Left ventricle myocardium inferior (tissue), 1 donor: ENCODE measurements at regions of chr3 and their contacts with region 1.

Region 1: DNA sequence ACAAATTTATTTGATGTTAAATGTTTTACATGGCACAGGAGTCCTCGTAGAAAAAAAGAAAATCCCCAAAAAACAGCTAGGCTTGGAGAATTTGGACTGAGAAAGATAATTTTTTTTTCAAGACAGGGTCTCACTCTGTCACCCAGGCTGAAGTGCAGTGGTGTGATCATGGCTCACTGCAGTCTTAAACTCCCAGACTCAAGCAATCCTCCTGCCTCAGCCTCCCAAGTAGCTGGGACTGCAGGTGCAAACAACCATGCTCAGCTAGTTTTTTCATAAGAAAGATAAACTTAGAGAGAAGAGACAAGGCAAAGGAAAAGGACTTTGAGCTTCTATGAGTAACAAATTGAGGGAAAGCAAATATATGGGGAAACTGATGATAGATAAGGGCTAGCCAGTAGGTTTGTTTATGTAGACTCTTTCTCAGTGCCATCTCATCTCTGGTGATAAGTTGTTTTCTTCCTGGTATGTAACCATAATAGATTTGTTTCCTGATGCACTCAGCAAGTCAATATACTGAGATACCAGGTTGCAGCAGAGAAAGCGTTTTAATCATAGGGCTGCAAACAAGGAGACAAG is 13.1 kb upstream of the TRMT10C start:
- DNase-seq: no peak
- H3K4me3 ChIP-seq: no peak overlapping the region
- H3K27ac ChIP-seq: no peak overlapping the region
- H3K4me1 ChIP-seq: no peaks in the 10 kb centered on the region
- H3K27me3 ChIP-seq: no peaks in the 10 kb centered on the region
- CTCF ChIP-seq: no peak

Region 2: GRCh38 chr3:100796556-100796955 is 752.1 kb before region 1 on chr3:
- intact Hi-C with region 1: no loop called
- DNase-seq: no peak
- H3K4me3 ChIP-seq: no peak overlapping the region
- H3K27ac ChIP-seq: no peak overlapping the region
- H3K4me1 ChIP-seq: peaks cover 7% of the 10 kb centered on the region
- H3K27me3 ChIP-seq: no peaks in the 10 kb centered on the region
- CTCF ChIP-seq: peak; percentile 51

Region 3: GRCh38 chr3:101591071-101591470 is 42.5 kb after region 1 on chr3:
- intact Hi-C with region 1: loop called (anchors 2 kb)
- DNase-seq: no peak
- H3K4me3 ChIP-seq: no peak overlapping the region
- H3K27ac ChIP-seq: no peak overlapping the region
- H3K4me1 ChIP-seq: peaks cover 15% of the 10 kb centered on the region
- H3K27me3 ChIP-seq: no peaks in the 10 kb centered on the region
- CTCF ChIP-seq: no peak